Naive thymus-derived CD4-positive, alpha-beta T cell (primary cell): ENCODE measurements at regions of chr1 and their contacts with region 1.

Region 1: GRCh38 chr1:64823691-64824476 is 79.0 kb downstream of the RAVER2 start:
- DNase-seq: peak in 8 of 9 donors; percentile 38 to 74 (median 64)
- ATAC-seq: peak; percentile 80
- H3K4me3 ChIP-seq: no peak overlapping the region
- H3K4me3 Mint-ChIP-seq: peak overlapping the region in 3 of 10 donors; percentile 30 to 44 (median 44)
- H3K27ac ChIP-seq: no peak overlapping the region
- H3K27ac Mint-ChIP-seq: peak overlapping the region in 7 of 9 donors; percentile 5 to 77 (median 39)
- H3K4me1 ChIP-seq: peaks cover 5 to 17% of the 10 kb centered on the region in 2 donors
- H3K4me1 Mint-ChIP-seq: peaks cover 13 to 31% (median 26%) of the 10 kb centered on the region in 7 donors
- H3K27me3 ChIP-seq: no peaks in the 10 kb centered on the region
- H3K27me3 Mint-ChIP-seq: peaks cover 0 to 2% (median 0%) of the 10 kb centered on the region in 5 donors

Region 2: GRCh38 chr1:64268653-64269557 is 555.0 kb before region 1 on chr1:
- CTCF ChIA-PET with region 1: interaction called, 12 read pairs
- POLR2A ChIA-PET with region 1: no interaction called
- intact Hi-C with region 1: loop called in 1 of 2 experiments (anchors 1 kb)
- DNase-seq: peak; percentile 30 to 74 (median 62)
- ATAC-seq: peak; percentile 75
- H3K4me3 ChIP-seq: no peak overlapping the region
- H3K4me3 Mint-ChIP-seq: no peak overlapping the region
- H3K27ac ChIP-seq: no peak overlapping the region
- H3K27ac Mint-ChIP-seq: no peak overlapping the region
- H3K4me1 ChIP-seq: no peaks in the 10 kb centered on the region
- H3K4me1 Mint-ChIP-seq: no peaks in the 10 kb centered on the region
- H3K27me3 ChIP-seq: no peaks in the 10 kb centered on the region
- H3K27me3 Mint-ChIP-seq: peaks cover 3 to 18% (median 10%) of the 10 kb centered on the region in 5 donors

Region 3: GRCh38 chr1:64553281-64553680 is 270.6 kb before region 1 on chr1:
- CTCF ChIA-PET with region 1: no interaction called
- POLR2A ChIA-PET with region 1: no interaction called
- intact Hi-C with region 1: loop called in 1 of 2 experiments (anchors 1 kb)
- DNase-seq: peak in 2 of 9 donors; percentile 12 to 16
- ATAC-seq: no peak
- H3K4me3 ChIP-seq: no peak overlapping the region
- H3K4me3 Mint-ChIP-seq: peak overlapping the region in 3 of 10 donors; percentile 6 to 18 (median 18)
- H3K27ac ChIP-seq: no peak overlapping the region
- H3K27ac Mint-ChIP-seq: peak overlapping the region in 7 of 9 donors; percentile 4 to 91 (median 70)
- H3K4me1 ChIP-seq: peaks cover 0 to 25% of the 10 kb centered on the region in 2 donors
- H3K4me1 Mint-ChIP-seq: peaks cover 20 to 81% (median 57%) of the 10 kb centered on the region in 7 donors
- H3K27me3 ChIP-seq: no peaks in the 10 kb centered on the region
- H3K27me3 Mint-ChIP-seq: peaks cover 0 to 57% (median 0%) of the 10 kb centered on the region in 5 donors

Region 4: GRCh38 chr1:64686828-64687724 is 136.8 kb before region 1 on chr1:
- CTCF ChIA-PET with region 1: interaction called, 8 read pairs
- POLR2A ChIA-PET with region 1: no interaction called
- intact Hi-C with region 1: loop called (anchors 1 kb)
- DNase-seq: peak in 7 of 9 donors; percentile 9 to 45 (median 39)
- ATAC-seq: peak; percentile 75
- H3K4me3 ChIP-seq: no peak overlapping the region
- H3K4me3 Mint-ChIP-seq: no peak overlapping the region
- H3K27ac ChIP-seq: no peak overlapping the region
- H3K27ac Mint-ChIP-seq: no peak overlapping the region
- H3K4me1 ChIP-seq: no peaks in the 10 kb centered on the region
- H3K4me1 Mint-ChIP-seq: peaks cover 0 to 11% (median 0%) of the 10 kb centered on the region in 7 donors
- H3K27me3 ChIP-seq: no peaks in the 10 kb centered on the region
- H3K27me3 Mint-ChIP-seq: no peaks in the 10 kb centered on the region

Region 5: DNA sequence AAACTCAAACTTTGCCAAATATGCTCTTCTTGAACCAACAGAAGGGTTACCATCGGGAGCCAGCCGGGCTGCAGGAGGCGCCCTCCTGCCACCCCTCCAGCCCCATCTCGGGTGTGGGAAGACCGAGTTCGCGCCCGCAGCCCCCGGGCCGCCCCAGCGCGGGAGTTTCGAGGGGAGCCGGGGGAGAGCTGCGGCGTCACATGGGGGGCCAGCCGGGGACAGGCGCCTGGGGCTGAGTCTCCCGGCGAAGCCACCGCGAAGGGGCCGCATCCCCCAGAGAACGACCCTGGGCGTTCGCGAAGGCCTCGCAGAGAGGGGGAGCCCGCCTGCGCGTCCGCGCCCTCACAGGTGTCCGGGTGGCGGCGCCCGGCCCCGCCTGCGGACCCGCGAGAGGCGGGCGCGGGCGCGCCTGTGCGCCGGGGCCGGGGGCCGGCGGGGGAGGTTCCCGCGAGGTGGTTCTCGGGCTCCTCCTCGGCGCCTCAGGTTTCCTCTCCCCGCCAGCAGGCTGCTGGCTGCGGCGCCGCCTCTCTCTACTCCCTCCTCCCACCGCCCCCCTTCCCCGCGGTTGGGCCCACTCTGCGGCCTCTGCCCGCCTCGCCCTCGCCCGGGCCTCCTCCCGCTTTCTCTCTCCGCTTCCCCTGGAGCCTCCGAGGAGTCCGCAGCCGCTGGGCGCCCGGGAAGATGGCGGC is 79.2 kb before region 1 on chr1 and contains the start of gene RAVER2:
- CTCF ChIA-PET with region 1: interaction called, 4 read pairs
- POLR2A ChIA-PET with region 1: no interaction called
- intact Hi-C with region 1: loop called (anchors 1 kb)
- DNase-seq: peak; percentile 41 to 60 (median 48)
- ATAC-seq: peak; percentile 84
- H3K4me3 ChIP-seq: peak within 1 kb of the TSS; percentile 55
- H3K4me3 Mint-ChIP-seq: peak within 1 kb of the TSS; percentile 80 to 98 (median 90)
- H3K27ac ChIP-seq: peak within 1 kb of the TSS; percentile 10
- H3K27ac Mint-ChIP-seq: peak within 1 kb of the TSS in 8 of 9 donors; percentile 28 to 93 (median 82)
- H3K4me1 ChIP-seq: peaks cover 5% of the 10 kb centered on the region in 2 donors
- H3K4me1 Mint-ChIP-seq: peaks cover 11 to 26% (median 16%) of the 10 kb centered on the region in 7 donors
- H3K27me3 ChIP-seq: no peaks in the 10 kb centered on the region
- H3K27me3 Mint-ChIP-seq: peaks cover 0 to 51% (median 6%) of the 10 kb centered on the region in 5 donors
- total RNA-seq, gene RAVER2: 0.29 to 1.9 (median 1.2) TPM

Region 6: DNA sequence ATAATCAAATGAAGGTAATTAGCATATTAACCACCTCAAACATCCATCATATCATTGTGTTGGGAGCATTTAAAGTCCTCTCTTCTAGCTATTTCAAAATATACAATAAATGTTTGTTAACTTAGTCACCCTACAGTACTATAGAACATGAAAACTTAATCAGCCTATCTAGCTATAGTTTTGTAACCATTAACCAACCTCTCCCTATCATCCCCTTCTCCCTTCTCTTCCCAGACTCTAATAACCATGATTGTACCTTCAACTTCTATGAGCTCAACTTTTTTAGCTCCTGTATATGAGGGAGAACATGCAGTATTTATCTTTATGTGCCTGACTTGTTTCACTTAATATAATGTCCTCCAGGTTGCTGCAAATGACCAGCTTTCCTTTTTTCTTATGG is 25.0 kb before region 1 on chr1:
- CTCF ChIA-PET with region 1: no interaction called
- POLR2A ChIA-PET with region 1: no interaction called
- intact Hi-C with region 1: no loop called
- DNase-seq: no peak
- ATAC-seq: no peak
- H3K4me3 ChIP-seq: no peak overlapping the region
- H3K4me3 Mint-ChIP-seq: no peak overlapping the region
- H3K27ac ChIP-seq: no peak overlapping the region
- H3K27ac Mint-ChIP-seq: no peak overlapping the region
- H3K4me1 ChIP-seq: no peaks in the 10 kb centered on the region
- H3K4me1 Mint-ChIP-seq: peaks cover 0 to under 1% (median 0%) of the 10 kb centered on the region in 7 donors
- H3K27me3 ChIP-seq: no peaks in the 10 kb centered on the region
- H3K27me3 Mint-ChIP-seq: peaks cover 0 to 5% (median 0%) of the 10 kb centered on the region in 5 donors

Region 7: GRCh38 chr1:65048335-65048734 is 224.5 kb after region 1 on chr1:
- CTCF ChIA-PET with region 1: no interaction called
- POLR2A ChIA-PET with region 1: no interaction called
- intact Hi-C with region 1: loop called in 1 of 2 experiments (anchors 5 kb)
- DNase-seq: no peak
- ATAC-seq: no peak
- H3K4me3 ChIP-seq: no peak overlapping the region
- H3K4me3 Mint-ChIP-seq: peak overlapping the region in 2 of 10 donors; percentile 12 to 14
- H3K27ac ChIP-seq: no peak overlapping the region
- H3K27ac Mint-ChIP-seq: peak overlapping the region in 6 of 9 donors; percentile 27 to 91 (median 63)
- H3K4me1 ChIP-seq: peaks cover 22 to 36% of the 10 kb centered on the region in 2 donors
- H3K4me1 Mint-ChIP-seq: peaks cover 31 to 77% (median 67%) of the 10 kb centered on the region in 7 donors
- H3K27me3 ChIP-seq: no peaks in the 10 kb centered on the region
- H3K27me3 Mint-ChIP-seq: no peaks in the 10 kb centered on the region